ENCODE measurements at regions of chr1 and their contacts with region 1.

Region 1: DNA sequence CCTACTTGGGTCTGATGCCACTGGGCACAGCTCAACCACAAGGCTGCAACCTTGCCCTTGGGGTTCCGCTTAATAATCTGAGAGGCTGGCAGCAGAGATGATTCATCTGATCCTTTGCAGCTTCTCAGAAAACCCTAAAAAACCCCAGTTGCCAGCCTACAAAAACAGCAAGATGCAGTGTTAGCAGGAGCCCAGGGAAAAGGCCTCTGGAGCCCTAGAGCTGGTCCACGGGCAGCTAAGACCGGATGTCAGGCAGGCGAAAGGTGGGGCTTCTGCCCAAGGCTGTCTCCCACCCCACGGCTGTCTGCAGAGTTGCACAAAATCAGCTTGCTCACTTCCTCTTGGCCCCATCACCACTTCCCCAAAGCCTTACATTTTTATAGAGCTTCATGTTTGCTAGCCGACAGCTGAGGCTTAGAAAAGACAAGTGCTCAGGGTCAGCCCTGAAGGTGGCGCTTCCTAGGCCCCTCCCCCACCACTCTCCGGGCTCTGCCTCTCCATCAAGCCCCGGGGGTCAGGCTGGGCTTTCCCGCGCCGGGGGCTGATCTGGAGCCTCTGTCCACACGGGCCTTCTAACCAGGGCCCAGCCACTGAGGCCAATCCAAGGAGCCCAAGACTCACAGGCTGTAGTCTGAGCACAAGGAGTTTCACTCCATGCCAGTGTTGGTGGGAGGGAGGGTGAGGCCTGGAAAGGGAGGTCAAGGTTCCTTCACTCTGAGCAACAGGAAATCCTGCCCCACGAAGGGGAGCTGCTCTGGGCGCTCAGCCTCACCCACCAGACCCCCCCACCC is 4.2 kb upstream of the ADORA3 start:
- DNase-seq: peak; percentile 82 to 92 (median 91)
- ATAC-seq: peak; percentile 78 to 85
- H3K4me3 ChIP-seq: peak overlapping the region; percentile 2
- H3K27ac ChIP-seq: peak overlapping the region; percentile 82
- H3K4me1 ChIP-seq: peaks cover 10% of the 10 kb centered on the region
- H3K27me3 ChIP-seq: no peaks in the 10 kb centered on the region

Region 2: GRCh38 chr1:111099289-111099688 is 408.3 kb before region 1 on chr1:
- intact Hi-C with region 1: no loop called
- DNase-seq: no peak
- ATAC-seq: no peak
- H3K4me3 ChIP-seq: no peak overlapping the region
- H3K27ac ChIP-seq: no peak overlapping the region
- H3K4me1 ChIP-seq: no peaks in the 10 kb centered on the region
- H3K27me3 ChIP-seq: no peaks in the 10 kb centered on the region

Region 3: DNA sequence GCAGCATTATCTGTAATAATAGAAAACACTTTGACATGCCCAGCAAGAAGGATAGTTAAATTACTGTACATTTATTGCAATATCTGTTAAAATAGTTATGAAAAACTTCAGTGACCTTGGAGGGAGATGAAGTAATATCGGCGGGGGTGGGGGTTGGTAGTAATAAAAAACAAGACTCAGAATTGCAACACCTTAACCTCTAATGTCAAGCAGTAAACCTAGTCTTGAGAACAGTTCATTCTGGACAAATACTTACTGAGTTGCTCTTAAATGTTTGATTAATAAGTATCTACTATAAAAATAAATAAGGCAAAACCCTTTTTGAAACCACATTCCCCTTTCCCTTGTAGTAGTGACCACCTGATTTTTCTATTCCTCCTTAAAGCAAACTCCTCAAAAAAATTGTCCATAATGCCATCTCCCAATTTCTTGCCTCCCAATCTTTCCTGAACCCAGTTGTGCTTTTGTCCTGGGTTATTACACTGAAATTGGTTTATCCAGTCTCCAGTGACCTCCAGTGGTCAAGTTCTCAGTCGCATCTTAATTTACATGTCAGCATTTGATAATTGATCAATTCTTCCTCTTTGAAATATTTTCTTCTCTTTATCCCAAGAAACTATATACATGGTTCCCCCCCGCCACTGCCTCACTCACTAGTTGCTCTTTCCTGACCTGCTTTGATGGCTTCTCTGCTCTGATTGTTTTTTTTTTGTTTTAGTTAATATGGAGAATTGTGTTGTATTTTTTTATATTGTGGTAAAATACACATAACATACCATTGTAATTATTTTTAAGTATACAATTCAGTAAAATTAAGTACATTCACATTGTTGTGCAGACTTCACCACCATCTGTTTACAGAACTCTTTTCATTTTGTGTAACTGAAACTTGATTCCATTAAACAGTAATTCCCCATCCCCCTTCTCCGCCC is 148.7 kb after region 1 on chr1:
- intact Hi-C with region 1: loop called (anchors 2 to 5 kb)
- DNase-seq: no peak
- ATAC-seq: peak; percentile 60 to 72
- H3K4me3 ChIP-seq: no peak overlapping the region
- H3K27ac ChIP-seq: no peak overlapping the region
- H3K4me1 ChIP-seq: peaks cover 3% of the 10 kb centered on the region
- H3K27me3 ChIP-seq: no peaks in the 10 kb centered on the region

Measured in right cardiac atrium (tissue), 5 donors.